GM13977 (cell line): ENCODE measurements at regions of chr2 and their contacts with region 1.

Region 1: GRCh38 chr2:231522799-231523180 is 7.5 kb downstream of the NMUR1 start:
- DNase-seq: no peak
- CTCF ChIP-seq: no peak

Region 2: GRCh38 chr2:230956827-230957755 is 565.7 kb before region 1 on chr2:
- in situ Hi-C with region 1: no loop called
- DNase-seq: peak; percentile 80
- CTCF ChIP-seq: no peak

Region 3: DNA sequence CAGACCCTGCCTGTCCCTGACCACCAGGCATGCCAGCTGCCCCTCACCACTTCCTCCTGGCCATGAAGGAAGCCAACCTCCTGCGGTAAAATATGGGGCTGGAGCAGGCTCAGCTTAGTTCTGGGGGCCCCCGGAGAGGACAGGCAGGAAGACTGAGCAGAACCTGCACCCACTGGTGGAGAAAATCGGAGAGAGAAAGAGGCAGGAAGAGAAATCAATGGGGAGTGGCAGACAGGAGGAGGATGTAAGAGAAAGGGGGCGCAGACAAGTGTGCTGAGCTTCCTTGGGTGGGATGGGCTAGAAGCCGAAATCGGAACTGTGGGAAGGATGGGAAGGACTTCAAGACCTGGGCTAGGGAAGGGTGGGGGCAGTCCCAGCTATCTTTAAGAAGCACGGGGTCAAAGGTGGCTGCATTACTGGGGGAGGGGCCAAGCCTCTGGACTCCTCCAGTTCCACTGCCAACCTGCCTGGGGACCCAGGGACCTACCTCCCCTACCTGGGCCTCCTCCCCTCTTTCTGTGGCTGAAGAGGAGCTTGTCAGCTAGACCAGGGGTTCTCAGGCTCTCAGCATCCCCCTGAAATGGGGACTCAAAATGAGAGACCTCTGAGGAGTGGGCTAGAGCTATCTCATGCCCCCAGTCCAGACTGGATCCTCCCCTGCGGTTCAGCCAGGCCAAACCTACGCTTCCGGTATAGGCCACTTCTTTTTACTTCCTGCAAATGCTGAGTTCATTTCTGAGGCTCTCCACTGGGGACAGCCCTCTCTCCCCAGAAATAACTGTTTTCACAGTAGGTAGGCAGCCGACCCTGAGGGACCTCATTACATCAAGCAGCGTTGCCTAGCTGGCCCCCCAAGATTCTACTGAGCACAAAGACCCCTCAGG is 160.9 kb before region 1 on chr2:
- in situ Hi-C with region 1: no loop called
- DNase-seq: peak; percentile 91
- CTCF ChIP-seq: peak; percentile 37

Region 4: DNA sequence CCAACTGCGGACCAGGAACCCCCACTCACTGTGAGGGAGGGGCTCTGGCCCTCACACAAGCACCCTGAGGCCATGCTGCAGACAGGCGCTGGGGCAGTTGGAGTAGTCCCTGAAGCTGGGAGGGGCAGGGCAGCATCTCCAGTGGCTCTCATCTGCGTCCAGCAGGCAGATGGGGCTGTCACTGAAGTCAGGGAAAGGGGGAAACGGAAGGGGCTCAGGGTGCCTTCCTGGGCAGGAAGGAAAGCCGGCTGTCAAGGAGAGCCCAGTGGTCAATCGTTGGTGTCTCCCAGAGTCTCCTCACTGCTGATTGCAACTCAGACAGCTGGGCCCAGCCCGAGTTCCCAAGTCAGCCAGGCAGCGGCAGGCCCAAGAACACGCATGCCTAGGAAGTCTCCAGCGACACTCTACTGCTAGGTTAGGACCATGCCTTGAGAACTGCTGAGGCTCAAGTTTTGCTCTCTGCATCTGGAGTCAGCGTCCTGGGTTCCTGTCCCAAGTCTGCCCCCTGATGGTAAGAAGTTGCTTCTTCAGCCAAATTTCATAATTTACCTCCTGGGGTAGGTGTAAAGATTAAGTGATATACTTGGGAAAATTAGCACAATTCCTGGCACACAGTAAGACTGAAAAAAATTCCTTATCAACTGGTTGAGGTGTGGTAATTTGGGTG is 34.9 kb after region 1 on chr2:
- in situ Hi-C with region 1: loop called (anchors 5 kb)
- DNase-seq: peak; percentile 86
- CTCF ChIP-seq: peak; percentile 72

Region 5: GRCh38 chr2:231583982-231584381 is 61.2 kb after region 1 on chr2:
- in situ Hi-C with region 1: no loop called
- DNase-seq: no peak
- CTCF ChIP-seq: no peak

Region 6: GRCh38 chr2:231985823-231986261 is 463.1 kb after region 1 on chr2:
- in situ Hi-C with region 1: no loop called
- DNase-seq: no peak
- CTCF ChIP-seq: no peak